ENCODE measurements at regions of chr9 and their contacts with region 1.

Region 1: GRCh38 chr9:13446938-13447842 is 167.7 kb upstream of the MPDZ start:
- DNase-seq: no peak

Region 2: DNA sequence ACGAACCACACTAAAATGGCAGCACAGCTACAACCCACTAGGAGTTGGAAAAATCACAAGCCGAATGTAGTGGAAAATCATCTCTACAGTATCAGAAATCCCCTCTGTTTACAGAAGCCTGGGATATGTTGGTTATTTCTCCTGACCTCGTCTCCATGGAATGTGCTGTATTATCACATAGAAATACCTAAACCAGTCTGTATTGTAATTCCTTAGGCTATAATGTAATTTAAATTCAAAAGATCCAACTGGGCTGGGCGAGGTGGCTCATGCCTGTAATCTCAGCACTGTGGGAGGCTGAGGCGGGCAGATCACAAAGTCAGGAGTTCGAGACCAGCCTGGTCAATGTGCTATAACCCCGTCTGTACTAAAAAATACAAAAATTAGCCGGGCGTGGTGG is 77.1 kb after region 1 on chr9:
- intact Hi-C with region 1: loop called (anchors 5 kb)
- DNase-seq: no peak

Region 3: GRCh38 chr9:13568841-13569601 is 121.8 kb after region 1 on chr9:
- intact Hi-C with region 1: loop called (anchors 5 kb)
- DNase-seq: no peak

Region 4: GRCh38 chr9:13688994-13689600 is 241.9 kb after region 1 on chr9:
- intact Hi-C with region 1: loop called (anchors 5 kb)
- DNase-seq: no peak

Region 5: GRCh38 chr9:13787234-13787833 is 340.1 kb after region 1 on chr9:
- intact Hi-C with region 1: loop called (anchors 10 kb)
- DNase-seq: no peak

Region 6: GRCh38 chr9:13898957-13899356 is 451.8 kb after region 1 on chr9:
- intact Hi-C with region 1: loop called (anchors 10 kb)
- DNase-seq: no peak

Region 7: DNA sequence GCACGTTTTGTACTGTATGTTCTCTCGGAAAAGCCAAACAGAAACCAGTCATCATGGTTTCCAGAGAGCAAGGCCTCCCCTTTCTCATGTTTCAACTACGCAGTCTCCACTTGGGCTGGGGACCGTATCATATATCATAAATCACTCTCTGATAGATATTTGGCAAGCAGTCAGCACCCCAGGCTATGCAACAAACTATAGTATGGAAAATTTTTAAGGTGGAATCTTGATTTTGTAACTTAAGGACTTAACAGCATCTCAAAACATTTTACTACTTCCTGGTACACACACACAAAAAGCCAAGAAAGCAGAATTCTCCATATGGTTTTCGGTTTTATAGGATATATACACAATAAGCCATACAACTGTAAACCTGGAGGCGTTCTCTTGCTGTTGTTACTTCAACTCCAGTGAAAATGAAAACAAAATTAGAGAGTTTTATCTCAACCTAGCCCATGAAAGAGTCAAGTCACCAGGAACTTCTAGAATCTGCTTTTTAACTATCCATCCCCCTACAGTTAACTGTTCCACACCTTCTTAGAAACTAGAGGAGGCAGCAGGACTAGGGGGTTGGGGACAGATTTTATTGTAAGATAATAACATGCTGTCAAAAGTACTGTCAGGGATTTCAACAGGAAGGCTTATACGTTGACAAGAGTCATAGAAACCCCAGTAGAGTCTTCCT is 583.3 kb after region 1 on chr9:
- intact Hi-C with region 1: loop called (anchors 10 kb)
- DNase-seq: no peak